ENCODE measurements at regions of chr12 and their contacts with region 1.

Region 1: DNA sequence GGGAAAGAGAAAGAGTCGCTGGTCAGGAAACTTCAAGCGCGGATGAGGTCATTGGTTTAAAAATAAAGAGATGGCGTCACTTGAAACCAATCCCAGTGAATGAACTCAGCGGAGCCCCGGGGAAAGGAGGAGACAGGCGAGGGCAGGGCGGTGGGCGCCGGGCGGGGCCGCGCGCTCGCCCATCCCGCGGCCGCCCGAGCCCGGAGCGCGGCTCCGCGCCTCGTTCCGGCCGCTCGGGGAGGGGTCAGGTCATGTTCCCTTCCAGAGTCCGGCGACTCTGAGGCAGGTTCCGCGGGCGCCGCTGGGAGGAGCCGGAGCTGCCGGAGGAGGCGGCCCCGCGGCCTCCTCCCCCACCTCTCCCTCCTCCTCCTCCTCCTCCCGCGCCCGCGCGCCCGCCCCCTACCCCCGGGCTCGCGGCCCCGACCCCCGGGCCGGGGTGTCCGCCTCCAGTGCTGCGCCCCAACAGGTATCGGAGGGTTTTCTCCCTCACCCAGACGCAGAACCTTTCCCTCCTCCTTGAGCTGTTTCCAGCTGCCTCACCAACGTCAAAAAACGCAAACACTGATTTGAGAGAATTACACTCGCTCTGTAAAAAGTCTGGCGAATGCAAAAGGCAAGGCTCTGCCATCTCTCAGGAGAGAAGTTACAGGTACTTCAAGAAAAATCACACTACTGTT is at the start of gene DUSP16:
- DNase-seq: peak; percentile 78 to 90 (median 80)
- H3K4me3 ChIP-seq: peak within 1 kb of the TSS; percentile 60 to 82 (median 76)
- H3K4me3 Mint-ChIP-seq: peak within 1 kb of the TSS; percentile 83 to 90
- H3K27ac ChIP-seq: peak within 1 kb of the TSS in 1 of 2 donors; percentile 51
- H3K27ac Mint-ChIP-seq: peak within 1 kb of the TSS; percentile 81 to 94 (median 88)
- H3K4me1 ChIP-seq: peaks cover 15% of the 10 kb centered on the region in 2 donors
- H3K4me1 Mint-ChIP-seq: peaks cover 14% of the 10 kb centered on the region
- H3K27me3 ChIP-seq: no peaks in the 10 kb centered on the region
- H3K27me3 Mint-ChIP-seq: peaks cover 2 to 4% (median 3%) of the 10 kb centered on the region in 3 donors
- CTCF ChIP-seq: no peak
- polyA plus RNA-seq, gene DUSP16: 0.04 to 0.46 (median 0.27) TPM

Region 2: DNA sequence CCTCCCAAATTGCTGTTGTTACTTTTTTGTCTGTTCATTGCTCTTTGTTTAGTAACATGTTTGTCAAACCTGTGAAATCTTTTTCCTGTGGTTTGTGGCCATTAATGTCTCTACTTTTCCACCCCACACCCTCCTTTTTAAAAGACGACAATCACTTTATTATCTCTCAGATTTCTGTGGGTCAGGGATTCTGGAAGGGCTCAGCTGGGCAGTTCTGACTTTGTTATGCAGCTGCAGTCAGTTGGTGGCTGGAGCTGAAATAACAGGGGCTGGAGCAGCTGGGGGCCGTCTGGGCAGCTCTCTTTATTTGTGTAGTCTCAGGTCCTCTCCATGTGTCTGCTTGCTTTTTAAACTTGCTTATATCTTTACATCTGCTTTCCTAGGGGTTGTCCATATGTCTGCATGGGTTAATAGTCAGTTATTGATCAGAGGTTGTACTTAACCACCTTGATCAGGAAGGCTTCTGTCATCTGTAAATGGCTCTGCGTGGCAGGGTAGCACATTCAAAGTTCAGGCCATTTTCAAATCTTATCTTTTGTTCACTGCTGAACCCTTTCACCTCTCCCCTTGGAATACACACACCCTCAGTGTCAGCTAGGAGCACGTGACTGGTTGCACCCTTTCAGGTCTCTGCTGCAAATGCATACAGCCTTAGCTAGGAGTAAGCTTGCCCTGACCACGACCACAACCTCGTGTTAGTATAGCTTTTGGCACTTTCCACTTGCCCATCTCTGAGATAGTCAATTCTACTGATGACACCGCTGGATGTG is 178.0 kb before region 1 on chr12:
- intact Hi-C with region 1: loop called (anchors 2 to 5 kb)
- DNase-seq: no peak
- H3K4me3 ChIP-seq: no peak overlapping the region
- H3K4me3 Mint-ChIP-seq: no peak overlapping the region
- H3K27ac ChIP-seq: no peak overlapping the region
- H3K27ac Mint-ChIP-seq: peak overlapping the region in 2 of 7 donors; percentile 37 to 56
- H3K4me1 ChIP-seq: peaks cover 7 to 9% of the 10 kb centered on the region in 2 donors
- H3K4me1 Mint-ChIP-seq: peaks cover 11% of the 10 kb centered on the region
- H3K27me3 ChIP-seq: no peaks in the 10 kb centered on the region
- H3K27me3 Mint-ChIP-seq: peaks cover 0 to 2% (median 1%) of the 10 kb centered on the region in 3 donors
- CTCF ChIP-seq: no peak

Region 3: GRCh38 chr12:12467688-12468261 is 94.9 kb before region 1 on chr12:
- intact Hi-C with region 1: loop called in 1 of 2 experiments (anchors 10 kb)
- DNase-seq: peak in 2 of 3 donors; percentile 30 to 31
- H3K4me3 ChIP-seq: no peak overlapping the region
- H3K4me3 Mint-ChIP-seq: peak overlapping the region; percentile 26 to 42
- H3K27ac ChIP-seq: peak overlapping the region in 1 of 2 donors; percentile 14
- H3K27ac Mint-ChIP-seq: peak overlapping the region in 5 of 7 donors; percentile 3 to 76 (median 26)
- H3K4me1 ChIP-seq: peaks cover 12 to 13% of the 10 kb centered on the region in 2 donors
- H3K4me1 Mint-ChIP-seq: peaks cover 21% of the 10 kb centered on the region
- H3K27me3 ChIP-seq: no peaks in the 10 kb centered on the region
- H3K27me3 Mint-ChIP-seq: peaks cover 0 to 5% (median 1%) of the 10 kb centered on the region in 3 donors
- CTCF ChIP-seq: no peak

Region 4: DNA sequence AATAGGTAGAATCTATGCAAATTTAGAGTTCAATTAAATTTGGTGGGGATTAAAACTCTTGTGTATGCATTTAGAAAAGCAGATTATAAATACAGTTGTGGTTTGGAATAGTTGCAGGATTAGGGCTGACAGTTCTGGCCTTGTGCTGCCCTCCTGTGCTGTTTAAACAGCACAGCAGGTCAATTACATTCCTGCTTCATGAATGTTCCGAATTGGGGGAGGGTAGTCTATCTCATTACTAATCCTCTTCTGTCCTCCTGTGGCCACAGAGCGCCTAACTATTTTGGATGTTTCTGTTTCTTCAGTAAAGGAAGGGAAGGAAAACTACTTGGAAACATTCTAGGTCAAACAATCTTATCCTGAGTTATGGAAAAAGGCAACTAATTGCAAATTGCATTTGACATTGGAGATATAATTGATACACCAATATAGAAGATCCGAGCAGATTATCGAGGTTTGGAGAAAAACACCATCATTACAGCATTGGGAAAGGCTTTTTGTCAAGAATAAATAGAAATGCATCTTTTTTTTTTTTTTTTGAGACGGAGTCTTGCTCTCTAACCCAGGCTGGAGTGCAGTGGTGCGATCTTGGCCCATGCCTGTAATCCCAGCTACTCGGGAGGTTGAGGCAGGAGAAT is 142.0 kb after region 1 on chr12:
- intact Hi-C with region 1: loop called in 1 of 2 experiments (anchors 10 kb)
- DNase-seq: peak; percentile 76 to 80 (median 79)
- H3K4me3 ChIP-seq: no peak overlapping the region
- H3K4me3 Mint-ChIP-seq: no peak overlapping the region
- H3K27ac ChIP-seq: no peak overlapping the region
- H3K27ac Mint-ChIP-seq: peak overlapping the region in 1 of 7 donors; percentile 28
- H3K4me1 ChIP-seq: peaks cover 18 to 22% of the 10 kb centered on the region in 2 donors
- H3K4me1 Mint-ChIP-seq: peaks cover 15% of the 10 kb centered on the region
- H3K27me3 ChIP-seq: no peaks in the 10 kb centered on the region
- H3K27me3 Mint-ChIP-seq: no peaks in the 10 kb centered on the region
- CTCF ChIP-seq: peak; percentile 92

Measured in CD14-positive monocyte (primary cell).